ENCODE measurements at regions of chr6 and their contacts with region 1.

Region 1: GRCh38 chr6:47631269-47631772 is 67.1 kb upstream of the ADGRF4 start:
- DNase-seq: peak; percentile 32
- H3K4me3 Mint-ChIP-seq: no peak overlapping the region
- H3K27ac Mint-ChIP-seq: no peak overlapping the region
- H3K4me1 Mint-ChIP-seq: peaks cover 19% of the 10 kb centered on the region
- H3K27me3 Mint-ChIP-seq: peaks cover 5% of the 10 kb centered on the region

Region 2: GRCh38 chr6:47733879-47734558 is 102.7 kb after region 1 on chr6:
- CTCF ChIA-PET with region 1: interaction called, 47 read pairs
- DNase-seq: no peak
- H3K4me3 Mint-ChIP-seq: no peak overlapping the region
- H3K27ac Mint-ChIP-seq: no peak overlapping the region
- H3K4me1 Mint-ChIP-seq: no peaks in the 10 kb centered on the region
- H3K27me3 Mint-ChIP-seq: peaks cover 6% of the 10 kb centered on the region

Region 3: GRCh38 chr6:47780510-47781356 is 149.4 kb after region 1 on chr6:
- CTCF ChIA-PET with region 1: interaction called, 73 read pairs
- DNase-seq: peak; percentile 48
- H3K4me3 Mint-ChIP-seq: no peak overlapping the region
- H3K27ac Mint-ChIP-seq: no peak overlapping the region
- H3K4me1 Mint-ChIP-seq: peaks cover 9% of the 10 kb centered on the region
- H3K27me3 Mint-ChIP-seq: peaks cover 20% of the 10 kb centered on the region

Region 4: GRCh38 chr6:47787620-47788497 is 156.5 kb after region 1 on chr6:
- CTCF ChIA-PET with region 1: interaction called, 73 read pairs
- DNase-seq: peak; percentile 66
- H3K4me3 Mint-ChIP-seq: no peak overlapping the region
- H3K27ac Mint-ChIP-seq: no peak overlapping the region
- H3K4me1 Mint-ChIP-seq: no peaks in the 10 kb centered on the region
- H3K27me3 Mint-ChIP-seq: peaks cover 31% of the 10 kb centered on the region